ENCODE measurements at regions of chr7 and their contacts with region 1.

Region 1: GRCh38 chr7:18290223-18290622 is 205.3 kb upstream of the HDAC9 start:
- DNase-seq: no peak
- H3K4me3 ChIP-seq: no peak overlapping the region
- H3K27ac ChIP-seq: no peak overlapping the region
- H3K4me1 ChIP-seq: no peaks in the 10 kb centered on the region
- H3K27me3 ChIP-seq: no peaks in the 10 kb centered on the region
- CTCF ChIP-seq: no peak
- POLR2A ChIP-seq: no peak

Region 2: DNA sequence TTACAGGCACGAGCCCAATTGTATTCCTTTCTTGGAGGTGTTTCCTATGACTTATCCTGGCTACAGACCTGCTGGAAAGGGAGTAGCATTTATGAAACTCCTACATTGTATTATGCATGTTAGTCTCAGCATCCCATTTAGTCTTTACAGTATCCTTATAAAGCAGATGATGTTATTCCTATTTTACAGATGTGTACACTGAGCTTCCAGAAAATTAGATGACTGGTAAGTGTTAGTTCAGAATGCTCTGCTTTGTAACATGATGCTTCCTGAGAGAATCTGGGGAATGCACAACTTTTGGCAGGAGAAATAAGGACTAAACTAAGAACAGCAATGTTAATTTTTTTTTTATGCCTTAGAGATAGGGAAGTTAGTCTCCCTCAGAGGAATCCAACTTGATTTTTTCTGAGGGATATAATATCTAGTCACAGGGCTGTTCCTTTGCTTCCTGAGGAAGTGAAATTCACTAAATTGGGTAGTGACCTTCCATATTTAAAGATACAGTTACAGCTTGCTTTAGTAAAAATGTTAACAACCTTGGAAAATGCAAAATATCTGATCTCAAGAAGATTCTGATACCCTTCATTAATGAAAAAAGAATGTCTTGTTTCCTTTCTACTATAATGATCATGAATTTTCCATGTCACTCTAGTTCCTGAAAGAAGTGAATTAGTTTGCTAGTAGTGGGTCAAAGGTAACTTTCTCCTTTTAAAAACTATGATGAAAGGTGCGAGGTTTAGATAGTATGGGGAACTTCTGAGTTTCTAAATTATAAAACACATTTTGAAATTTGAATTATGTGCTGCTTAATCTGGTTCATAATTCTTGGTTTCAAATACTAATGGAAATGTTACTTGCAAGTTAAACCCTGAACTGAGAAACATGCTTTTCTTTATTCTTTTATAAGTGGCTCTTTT is 68.6 kb before region 1 on chr7:
- intact Hi-C with region 1: loop called (anchors 10 kb)
- DNase-seq: no peak
- H3K4me3 ChIP-seq: no peak overlapping the region
- H3K27ac ChIP-seq: no peak overlapping the region
- H3K4me1 ChIP-seq: no peaks in the 10 kb centered on the region
- H3K27me3 ChIP-seq: no peaks in the 10 kb centered on the region
- CTCF ChIP-seq: no peak
- POLR2A ChIP-seq: no peak

Region 3: DNA sequence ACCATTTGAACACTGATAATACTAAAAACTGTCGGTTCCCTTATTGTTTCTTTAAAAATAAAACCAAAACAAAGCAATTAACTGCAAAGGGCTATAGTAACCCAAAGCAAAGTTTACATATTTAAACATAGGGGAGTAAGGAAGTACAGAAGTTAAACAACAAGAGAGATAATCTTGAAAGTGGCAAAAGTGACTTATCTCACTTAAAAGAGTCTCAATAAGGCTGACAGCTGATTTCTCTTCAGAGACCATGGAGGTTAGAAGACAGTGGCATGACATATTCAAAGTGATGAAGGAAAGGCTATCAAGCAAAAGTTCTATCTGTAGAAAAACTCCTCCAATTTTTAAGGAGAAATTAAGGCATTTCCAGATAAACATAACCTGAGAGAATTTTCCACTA is 28.2 kb before region 1 on chr7:
- intact Hi-C with region 1: no loop called
- DNase-seq: no peak
- H3K4me3 ChIP-seq: no peak overlapping the region
- H3K27ac ChIP-seq: no peak overlapping the region
- H3K4me1 ChIP-seq: no peaks in the 10 kb centered on the region
- H3K27me3 ChIP-seq: no peaks in the 10 kb centered on the region
- CTCF ChIP-seq: no peak
- POLR2A ChIP-seq: no peak

Region 4: GRCh38 chr7:19665399-19666008 is 1375.3 kb after region 1 on chr7:
- intact Hi-C with region 1: no loop called
- DNase-seq: no peak
- H3K4me3 ChIP-seq: no peak overlapping the region
- H3K27ac ChIP-seq: no peak overlapping the region
- H3K4me1 ChIP-seq: no peaks in the 10 kb centered on the region
- H3K27me3 ChIP-seq: no peaks in the 10 kb centered on the region
- CTCF ChIP-seq: peak in 3 of 4 experiments; percentile 45 to 59 (median 52)
- POLR2A ChIP-seq: no peak

Measured in prostate gland (tissue), 2 donors.